Tibial artery (tissue), 4 donors: ENCODE measurements at regions of chr1 and their contacts with region 1.

Region 1: GRCh38 chr1:110338886-110339406 is at the start of gene RBM15:
- DNase-seq: peak; percentile 99 to 100
- H3K4me3 ChIP-seq: peak within 1 kb of the TSS; percentile 94 to 95
- H3K27ac ChIP-seq: peak within 1 kb of the TSS; percentile 92 to 97
- H3K4me1 ChIP-seq: peaks cover 0 to 49% (median 40%) of the 10 kb centered on the region in 4 donors
- H3K27me3 ChIP-seq: no peaks in the 10 kb centered on the region
- CTCF ChIP-seq: no peak

Region 2: DNA sequence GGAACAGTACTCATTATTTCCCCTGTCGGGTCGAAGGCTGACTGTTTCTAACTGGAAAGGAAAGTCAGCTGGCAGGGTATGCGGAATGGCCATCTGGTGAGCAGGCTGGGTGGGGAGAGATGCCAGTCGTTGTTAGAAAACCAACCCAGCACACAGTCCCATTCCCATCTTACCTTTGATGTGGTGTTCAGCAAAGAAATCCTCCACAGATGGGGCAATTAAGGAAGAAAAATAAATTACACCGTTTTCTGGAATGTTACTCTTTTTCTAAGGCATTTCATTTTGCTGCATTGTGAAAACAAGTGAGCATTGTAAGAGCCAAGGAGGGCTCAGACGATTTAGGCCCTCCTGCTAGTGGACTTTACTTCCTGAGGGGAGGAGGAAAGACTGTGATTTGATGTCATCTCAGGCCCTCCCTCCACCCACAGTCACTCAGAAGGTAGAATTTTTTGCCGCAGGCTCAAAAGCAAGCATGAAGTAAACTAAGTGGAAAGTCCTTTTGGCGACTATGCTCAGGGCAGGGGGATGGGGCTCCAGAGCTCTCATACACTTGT is 51.8 kb after region 1 on chr1 and contains the start of gene SLC16A4:
- intact Hi-C with region 1: loop called (anchors 5 kb)
- DNase-seq: peak in 1 of 2 donors; percentile 30
- H3K4me3 ChIP-seq: peak within 1 kb of the TSS; percentile 45 to 53
- H3K27ac ChIP-seq: peak within 1 kb of the TSS; percentile 74 to 79
- H3K4me1 ChIP-seq: peaks cover 0 to 20% (median 13%) of the 10 kb centered on the region in 4 donors
- H3K27me3 ChIP-seq: no peaks in the 10 kb centered on the region
- CTCF ChIP-seq: no peak

Region 3: DNA sequence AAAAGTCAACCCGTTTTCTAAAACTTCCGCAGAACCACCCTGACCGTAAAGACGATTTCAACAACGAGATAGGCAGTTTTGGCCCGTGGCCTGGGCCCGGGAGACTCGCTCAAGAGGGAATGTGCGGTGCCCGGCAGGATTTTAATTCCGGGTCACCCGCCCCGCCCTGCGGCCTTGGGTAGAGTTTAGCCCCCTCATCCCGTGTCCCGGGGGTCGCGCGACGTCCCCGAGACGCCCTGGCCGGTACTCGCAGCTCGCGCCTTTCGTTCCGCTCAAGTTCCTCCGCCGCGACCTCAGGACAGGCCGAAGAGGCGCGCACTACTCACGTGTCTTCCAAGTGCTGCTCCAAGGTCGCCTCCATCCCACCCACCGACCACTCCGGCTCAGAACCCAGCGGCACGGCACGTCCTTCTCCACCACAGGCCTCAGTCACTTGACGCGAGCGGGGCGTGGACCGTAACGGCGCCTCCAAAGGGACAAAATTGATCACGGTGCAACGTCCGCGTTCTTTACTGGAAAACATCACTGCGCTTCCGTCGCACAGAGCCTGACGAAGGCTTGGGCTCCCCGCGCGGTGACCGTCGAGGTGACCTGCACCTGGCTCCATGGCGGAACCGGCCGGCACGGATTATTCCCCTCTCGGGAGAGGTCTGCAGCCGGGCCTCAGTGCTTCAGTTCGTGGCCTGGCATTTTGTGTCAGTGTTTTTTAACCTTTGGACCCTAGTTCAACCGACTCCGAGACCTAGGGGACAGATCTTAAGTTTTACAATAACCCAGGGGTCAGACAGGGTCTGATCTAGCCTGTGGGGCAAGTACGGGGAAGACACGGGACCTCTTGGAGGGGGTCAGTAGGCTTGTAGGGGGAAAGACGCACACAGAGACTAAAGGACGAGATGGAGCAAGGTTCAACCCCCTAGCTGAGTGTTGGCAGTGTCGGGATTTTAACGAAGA is 68.6 kb after region 1 on chr1 and contains the start of gene LAMTOR5:
- intact Hi-C with region 1: loop called (anchors 1 kb)
- DNase-seq: peak; percentile 95 to 96
- H3K4me3 ChIP-seq: peak within 1 kb of the TSS; percentile 86 to 87
- H3K27ac ChIP-seq: peak within 1 kb of the TSS; percentile 93 to 95
- H3K4me1 ChIP-seq: peaks cover 0 to 31% (median 14%) of the 10 kb centered on the region in 4 donors
- H3K27me3 ChIP-seq: no peaks in the 10 kb centered on the region
- CTCF ChIP-seq: peak in 1 of 2 experiments; percentile 7